CD4-positive, alpha-beta T cell (primary cell): ENCODE measurements at regions of chr12 and their contacts with region 1.

Region 1: GRCh38 chr12:132771126-132771838 is 9.7 kb upstream of the ANKLE2 start:
- DNase-seq: peak; percentile 28 to 86 (median 55)
- ATAC-seq: peak; percentile 88
- H3K4me3 ChIP-seq: peak overlapping the region; percentile 4
- H3K4me3 Mint-ChIP-seq: peak overlapping the region; percentile 82
- H3K27ac ChIP-seq: peak overlapping the region; percentile 60 to 62
- H3K27ac Mint-ChIP-seq: peak overlapping the region; percentile 95
- H3K4me1 ChIP-seq: peaks cover 67% of the 10 kb centered on the region
- H3K4me1 Mint-ChIP-seq: peaks cover 62% of the 10 kb centered on the region
- H3K27me3 ChIP-seq: no peaks in the 10 kb centered on the region
- H3K27me3 Mint-ChIP-seq: no peaks in the 10 kb centered on the region
- CTCF ChIP-seq: no peak

Region 2: DNA sequence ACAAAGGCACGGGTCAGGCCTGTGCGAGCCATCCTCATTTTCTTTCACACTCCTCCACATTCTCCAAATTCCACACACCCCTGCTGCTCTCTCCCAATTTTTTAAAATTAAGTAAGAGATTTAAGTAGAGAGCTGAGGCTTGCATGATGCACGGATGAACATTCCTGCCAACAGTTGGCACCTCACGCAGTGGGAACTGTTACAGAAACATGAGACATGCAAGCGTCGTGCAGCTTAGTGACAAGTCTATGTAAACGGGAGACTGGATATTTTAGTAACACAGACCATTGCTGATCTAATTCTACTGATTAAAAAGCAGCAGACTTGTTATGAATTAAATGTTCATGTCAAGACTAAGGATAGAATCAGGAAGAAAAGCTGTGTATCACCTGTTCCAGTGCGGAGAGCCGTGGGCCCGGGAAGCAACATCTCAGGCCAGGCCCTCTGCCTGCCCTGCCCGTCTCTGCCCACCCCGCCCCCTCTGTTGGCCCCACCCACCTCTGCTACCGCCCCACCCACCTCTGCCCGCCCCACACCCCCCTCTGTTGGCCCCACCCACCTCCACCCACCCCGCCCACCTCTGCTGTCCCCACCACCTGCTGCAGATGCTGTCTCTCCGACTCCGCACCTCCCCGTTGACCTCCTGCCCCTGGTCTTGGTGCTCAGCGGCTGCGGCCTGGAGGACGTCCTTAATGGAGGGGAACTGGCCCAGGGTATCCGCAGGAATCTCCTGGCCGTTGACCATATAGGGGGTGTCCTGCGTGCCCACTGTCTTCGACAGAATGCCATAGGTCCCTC is 36.2 kb after region 1 on chr12:
- CTCF ChIA-PET with region 1: no interaction called
- POLR2A ChIA-PET with region 1: no interaction called
- intact Hi-C with region 1: loop called (anchors 2 to 5 kb)
- DNase-seq: no peak
- ATAC-seq: no peak
- H3K4me3 ChIP-seq: no peak overlapping the region
- H3K4me3 Mint-ChIP-seq: no peak overlapping the region
- H3K27ac ChIP-seq: no peak overlapping the region
- H3K27ac Mint-ChIP-seq: peak overlapping the region; percentile 44
- H3K4me1 ChIP-seq: peaks cover 10% of the 10 kb centered on the region
- H3K4me1 Mint-ChIP-seq: peaks cover 23% of the 10 kb centered on the region
- H3K27me3 ChIP-seq: no peaks in the 10 kb centered on the region
- H3K27me3 Mint-ChIP-seq: no peaks in the 10 kb centered on the region
- CTCF ChIP-seq: no peak

Region 3: DNA sequence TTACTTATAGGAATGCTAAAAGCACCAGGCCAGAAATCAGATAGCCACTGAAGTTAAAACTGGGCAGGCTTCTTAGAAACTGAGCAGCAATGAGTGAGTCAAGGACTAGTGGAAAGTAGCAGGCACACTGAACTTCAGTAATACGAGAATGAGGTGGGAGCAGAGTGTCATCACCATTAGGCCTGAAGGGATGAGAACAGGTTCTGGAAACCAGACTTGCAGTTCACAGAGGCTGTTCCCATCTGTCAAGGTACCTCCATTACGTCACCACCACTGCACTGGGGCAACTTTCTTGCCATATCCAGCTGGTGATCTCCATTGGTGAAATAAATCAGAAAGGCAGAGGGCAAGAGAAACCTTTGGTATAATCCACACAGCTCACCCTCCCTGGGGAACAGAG is 374.7 kb after region 1 on chr12:
- CTCF ChIA-PET with region 1: no interaction called
- POLR2A ChIA-PET with region 1: no interaction called
- intact Hi-C with region 1: no loop called
- DNase-seq: no peak
- ATAC-seq: no peak
- H3K4me3 ChIP-seq: no peak overlapping the region
- H3K4me3 Mint-ChIP-seq: no peak overlapping the region
- H3K27ac ChIP-seq: no peak overlapping the region
- H3K27ac Mint-ChIP-seq: no peak overlapping the region
- H3K4me1 ChIP-seq: no peaks in the 10 kb centered on the region
- H3K4me1 Mint-ChIP-seq: no peaks in the 10 kb centered on the region
- H3K27me3 ChIP-seq: no peaks in the 10 kb centered on the region
- H3K27me3 Mint-ChIP-seq: no peaks in the 10 kb centered on the region
- CTCF ChIP-seq: no peak